ENCODE measurements at regions of chr12 and their contacts with region 1.

Region 1: DNA sequence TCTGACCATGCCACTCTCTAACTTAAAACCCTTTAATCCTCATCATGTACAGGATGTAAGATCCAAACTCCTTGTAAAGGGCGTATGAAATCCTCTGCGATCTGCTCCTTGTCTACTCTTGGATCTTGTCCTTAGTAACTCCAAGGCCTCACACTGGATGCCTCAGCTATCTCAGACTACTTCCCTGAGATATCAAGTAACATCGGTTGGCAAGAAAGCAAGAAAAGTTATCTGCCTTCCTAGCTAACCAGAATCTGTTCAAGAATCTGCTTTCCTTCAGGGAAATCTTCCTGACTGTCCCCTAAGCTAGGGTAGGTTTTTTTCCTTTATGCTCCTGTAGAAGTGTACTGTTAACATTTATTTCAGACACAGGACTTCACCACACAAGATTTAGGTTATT is 82.6 kb downstream of the TAOK3 start:
- DNase-seq: no peak
- H3K4me3 ChIP-seq: no peak overlapping the region
- H3K4me3 Mint-ChIP-seq: no peak overlapping the region
- H3K27ac Mint-ChIP-seq: no peak overlapping the region
- H3K4me1 ChIP-seq: no peaks in the 10 kb centered on the region
- H3K4me1 Mint-ChIP-seq: no peaks in the 10 kb centered on the region
- H3K27me3 ChIP-seq: no peaks in the 10 kb centered on the region
- H3K27me3 Mint-ChIP-seq: no peaks in the 10 kb centered on the region
- CTCF ChIP-seq: no peak

Region 2: GRCh38 chr12:118183705-118184104 is 106.4 kb before region 1 on chr12:
- CTCF ChIA-PET with region 1: no interaction called
- POLR2A ChIA-PET with region 1: no interaction called
- intact Hi-C with region 1: loop called (anchors 5 kb)
- DNase-seq: no peak
- H3K4me3 ChIP-seq: no peak overlapping the region
- H3K4me3 Mint-ChIP-seq: no peak overlapping the region
- H3K27ac Mint-ChIP-seq: no peak overlapping the region
- H3K4me1 ChIP-seq: no peaks in the 10 kb centered on the region
- H3K4me1 Mint-ChIP-seq: peaks cover 7% of the 10 kb centered on the region
- H3K27me3 ChIP-seq: no peaks in the 10 kb centered on the region
- H3K27me3 Mint-ChIP-seq: no peaks in the 10 kb centered on the region
- CTCF ChIP-seq: no peak

Region 3: GRCh38 chr12:118337194-118337838 is 47.2 kb after region 1 on chr12:
- CTCF ChIA-PET with region 1: no interaction called
- POLR2A ChIA-PET with region 1: no interaction called
- intact Hi-C with region 1: no loop called
- DNase-seq: no peak
- H3K4me3 ChIP-seq: no peak overlapping the region
- H3K4me3 Mint-ChIP-seq: no peak overlapping the region
- H3K27ac Mint-ChIP-seq: no peak overlapping the region
- H3K4me1 ChIP-seq: no peaks in the 10 kb centered on the region
- H3K4me1 Mint-ChIP-seq: no peaks in the 10 kb centered on the region
- H3K27me3 ChIP-seq: no peaks in the 10 kb centered on the region
- H3K27me3 Mint-ChIP-seq: no peaks in the 10 kb centered on the region
- CTCF ChIP-seq: no peak

Measured in Caco-2 (cell line).